ENCODE measurements at regions of chr18 and their contacts with region 1.

Region 1: GRCh38 chr18:63074981-63075404 is 244.6 kb downstream of the BCL2 start:
- DNase-seq: peak; percentile 70 to 75
- H3K4me3 ChIP-seq: peak overlapping the region; percentile 45
- H3K4me3 Mint-ChIP-seq: peak overlapping the region; percentile 80
- H3K27ac Mint-ChIP-seq: peak overlapping the region; percentile 71
- H3K4me1 ChIP-seq: peaks cover 22% of the 10 kb centered on the region
- H3K4me1 Mint-ChIP-seq: peaks cover 10% of the 10 kb centered on the region
- H3K27me3 ChIP-seq: no peaks in the 10 kb centered on the region
- H3K27me3 Mint-ChIP-seq: no peaks in the 10 kb centered on the region
- CTCF ChIP-seq: no peak

Region 2: GRCh38 chr18:62281684-62282083 is 793.3 kb before region 1 on chr18:
- CTCF ChIA-PET with region 1: no interaction called
- POLR2A ChIA-PET with region 1: no interaction called
- intact Hi-C with region 1: no loop called
- DNase-seq: no peak
- H3K4me3 ChIP-seq: no peak overlapping the region
- H3K4me3 Mint-ChIP-seq: no peak overlapping the region
- H3K27ac Mint-ChIP-seq: no peak overlapping the region
- H3K4me1 ChIP-seq: no peaks in the 10 kb centered on the region
- H3K4me1 Mint-ChIP-seq: no peaks in the 10 kb centered on the region
- H3K27me3 ChIP-seq: no peaks in the 10 kb centered on the region
- H3K27me3 Mint-ChIP-seq: no peaks in the 10 kb centered on the region
- CTCF ChIP-seq: no peak

Region 3: DNA sequence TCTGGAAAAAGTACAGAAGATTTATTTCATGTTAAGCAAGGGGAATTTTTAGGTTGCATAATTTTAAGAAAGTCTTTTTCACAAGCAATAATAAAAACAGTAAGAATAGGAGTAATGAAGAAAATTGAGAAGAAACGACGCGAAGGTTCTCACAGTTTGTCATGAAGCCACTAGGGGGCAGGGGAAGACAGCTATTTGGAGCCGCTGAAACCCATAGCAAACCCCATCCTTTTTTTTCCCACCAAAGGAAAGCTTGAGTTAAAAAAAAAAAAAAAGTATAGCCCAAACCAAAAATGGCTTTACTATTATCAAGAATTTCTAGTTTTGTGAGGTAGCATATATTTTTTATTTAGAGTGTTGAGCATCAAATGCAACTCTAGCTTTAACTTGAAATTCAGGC is 58.7 kb before region 1 on chr18:
- CTCF ChIA-PET with region 1: interaction called, 3 read pairs
- POLR2A ChIA-PET with region 1: no interaction called
- intact Hi-C with region 1: loop called (anchors 1 kb)
- DNase-seq: peak in 1 of 2 experiments; percentile 40
- H3K4me3 ChIP-seq: no peak overlapping the region
- H3K4me3 Mint-ChIP-seq: no peak overlapping the region
- H3K27ac Mint-ChIP-seq: no peak overlapping the region
- H3K4me1 ChIP-seq: no peaks in the 10 kb centered on the region
- H3K4me1 Mint-ChIP-seq: no peaks in the 10 kb centered on the region
- H3K27me3 ChIP-seq: no peaks in the 10 kb centered on the region
- H3K27me3 Mint-ChIP-seq: no peaks in the 10 kb centered on the region
- CTCF ChIP-seq: peak; percentile 40 to 60

Region 4: DNA sequence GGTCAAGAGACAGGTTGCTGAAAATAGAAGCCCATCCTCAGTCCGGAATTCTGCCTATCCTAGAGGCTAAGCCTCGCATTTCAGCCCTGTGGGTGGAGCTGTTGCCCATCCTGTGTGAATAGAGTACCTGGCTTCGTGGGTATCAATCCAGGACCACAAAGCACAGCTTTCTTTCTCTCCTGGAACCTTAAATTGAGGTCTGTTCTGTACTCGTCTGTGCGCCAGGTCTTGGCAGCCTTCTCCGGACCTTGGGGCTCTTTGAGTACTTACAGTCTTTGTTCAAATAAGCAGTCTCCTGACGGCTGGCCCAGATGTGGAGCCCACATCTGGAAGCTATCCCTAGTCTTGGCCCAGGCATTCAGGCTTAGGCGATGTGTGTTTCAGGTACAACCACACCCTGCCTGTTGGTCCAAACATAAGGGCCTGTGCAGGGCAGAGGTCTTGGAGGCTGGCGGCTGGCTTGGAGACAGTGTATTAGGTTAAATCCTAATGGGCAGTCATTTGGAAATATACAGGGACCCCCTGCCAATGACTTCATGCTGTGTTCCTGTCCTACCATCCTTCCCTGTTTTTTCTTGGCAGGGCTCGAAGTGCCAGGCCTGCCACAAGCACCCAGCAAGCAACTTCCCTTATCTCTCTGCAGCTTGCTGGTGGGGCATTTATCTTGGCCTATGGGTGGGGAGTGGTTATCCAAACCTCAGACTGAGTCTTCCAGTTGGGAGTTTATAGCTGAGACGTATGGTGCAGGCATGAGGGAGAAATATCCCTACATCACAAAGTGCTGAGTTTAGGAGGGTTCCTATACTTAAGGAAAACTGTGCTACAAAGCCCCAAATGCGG is 49.5 kb before region 1 on chr18:
- CTCF ChIA-PET with region 1: interaction called, 3 read pairs
- POLR2A ChIA-PET with region 1: no interaction called
- intact Hi-C with region 1: loop called (anchors 1 kb)
- DNase-seq: peak in 1 of 2 experiments; percentile 25
- H3K4me3 ChIP-seq: no peak overlapping the region
- H3K4me3 Mint-ChIP-seq: no peak overlapping the region
- H3K27ac Mint-ChIP-seq: no peak overlapping the region
- H3K4me1 ChIP-seq: no peaks in the 10 kb centered on the region
- H3K4me1 Mint-ChIP-seq: peaks cover 6% of the 10 kb centered on the region
- H3K27me3 ChIP-seq: no peaks in the 10 kb centered on the region
- H3K27me3 Mint-ChIP-seq: no peaks in the 10 kb centered on the region
- CTCF ChIP-seq: peak in 1 of 2 experiments; percentile 17

Region 5: DNA sequence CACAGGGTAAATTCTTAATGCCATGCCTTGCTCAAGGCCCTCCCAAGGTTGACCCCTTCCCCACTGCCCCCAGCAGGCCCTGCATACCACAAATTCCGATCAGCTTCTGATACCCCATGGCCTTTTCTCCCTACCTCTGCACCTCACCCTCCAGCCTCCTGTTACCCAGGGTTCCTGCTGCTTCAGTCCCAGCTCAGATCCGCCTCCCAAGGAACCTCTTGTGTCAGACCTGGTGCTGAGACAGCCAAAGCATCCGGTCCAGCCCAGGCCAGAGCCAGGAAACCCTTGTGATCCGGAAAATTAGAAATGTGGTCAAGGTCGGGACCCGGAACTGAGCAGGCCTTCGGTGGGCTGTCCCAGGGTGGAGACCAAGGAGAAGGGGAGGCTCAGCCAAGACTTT is 13.3 kb after region 1 on chr18:
- CTCF ChIA-PET with region 1: no interaction called
- POLR2A ChIA-PET with region 1: no interaction called
- intact Hi-C with region 1: loop called (anchors 1 kb)
- DNase-seq: peak; percentile 78 to 90
- H3K4me3 ChIP-seq: no peak overlapping the region
- H3K4me3 Mint-ChIP-seq: peak overlapping the region; percentile 58
- H3K27ac Mint-ChIP-seq: peak overlapping the region; percentile 90
- H3K4me1 ChIP-seq: peaks cover 21% of the 10 kb centered on the region
- H3K4me1 Mint-ChIP-seq: peaks cover 21% of the 10 kb centered on the region
- H3K27me3 ChIP-seq: no peaks in the 10 kb centered on the region
- H3K27me3 Mint-ChIP-seq: no peaks in the 10 kb centered on the region
- CTCF ChIP-seq: no peak

Region 6: GRCh38 chr18:63099848-63100629 is 25.0 kb after region 1 on chr18:
- CTCF ChIA-PET with region 1: no interaction called
- POLR2A ChIA-PET with region 1: no interaction called
- intact Hi-C with region 1: loop called (anchors 1 kb)
- DNase-seq: peak; percentile 59 to 71
- H3K4me3 ChIP-seq: no peak overlapping the region
- H3K4me3 Mint-ChIP-seq: peak overlapping the region; percentile 42
- H3K27ac Mint-ChIP-seq: peak overlapping the region; percentile 73
- H3K4me1 ChIP-seq: peaks cover 26% of the 10 kb centered on the region
- H3K4me1 Mint-ChIP-seq: peaks cover 18% of the 10 kb centered on the region
- H3K27me3 ChIP-seq: no peaks in the 10 kb centered on the region
- H3K27me3 Mint-ChIP-seq: no peaks in the 10 kb centered on the region
- CTCF ChIP-seq: no peak

Region 7: GRCh38 chr18:63131106-63131958 is 56.3 kb after region 1 on chr18:
- CTCF ChIA-PET with region 1: no interaction called
- POLR2A ChIA-PET with region 1: no interaction called
- intact Hi-C with region 1: loop called (anchors 2 kb)
- DNase-seq: no peak
- H3K4me3 ChIP-seq: no peak overlapping the region
- H3K4me3 Mint-ChIP-seq: no peak overlapping the region
- H3K27ac Mint-ChIP-seq: no peak overlapping the region
- H3K4me1 ChIP-seq: peaks cover 14% of the 10 kb centered on the region
- H3K4me1 Mint-ChIP-seq: peaks cover 9% of the 10 kb centered on the region
- H3K27me3 ChIP-seq: no peaks in the 10 kb centered on the region
- H3K27me3 Mint-ChIP-seq: no peaks in the 10 kb centered on the region
- CTCF ChIP-seq: peak; percentile 9 to 10

Region 8: GRCh38 chr18:63267975-63268721 is 193.2 kb after region 1 on chr18:
- CTCF ChIA-PET with region 1: no interaction called
- POLR2A ChIA-PET with region 1: no interaction called
- intact Hi-C with region 1: no loop called
- DNase-seq: no peak
- H3K4me3 ChIP-seq: no peak overlapping the region
- H3K4me3 Mint-ChIP-seq: no peak overlapping the region
- H3K27ac Mint-ChIP-seq: no peak overlapping the region
- H3K4me1 ChIP-seq: no peaks in the 10 kb centered on the region
- H3K4me1 Mint-ChIP-seq: no peaks in the 10 kb centered on the region
- H3K27me3 ChIP-seq: no peaks in the 10 kb centered on the region
- H3K27me3 Mint-ChIP-seq: no peaks in the 10 kb centered on the region
- CTCF ChIP-seq: no peak

Region 9: DNA sequence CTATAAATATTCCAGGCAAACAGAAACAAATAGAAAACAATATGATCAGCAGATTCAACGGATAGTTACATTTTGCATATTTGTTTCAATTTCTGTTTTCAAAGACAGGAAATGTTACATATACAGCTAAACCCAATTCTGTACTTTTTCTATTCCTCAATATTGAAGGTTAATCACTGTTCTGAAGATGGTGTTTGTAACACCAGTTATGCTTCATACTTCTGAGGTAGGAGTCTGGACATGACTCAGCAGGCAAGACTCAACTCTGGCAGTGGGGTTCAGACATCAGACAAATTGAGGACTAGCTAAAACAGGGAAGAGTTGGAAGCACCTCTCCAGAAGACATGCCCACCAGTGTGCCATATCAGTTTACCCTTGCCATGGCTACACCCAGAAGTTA is 528.8 kb after region 1 on chr18:
- CTCF ChIA-PET with region 1: no interaction called
- POLR2A ChIA-PET with region 1: no interaction called
- intact Hi-C with region 1: no loop called
- DNase-seq: no peak
- H3K4me3 ChIP-seq: no peak overlapping the region
- H3K4me3 Mint-ChIP-seq: no peak overlapping the region
- H3K27ac Mint-ChIP-seq: no peak overlapping the region
- H3K4me1 ChIP-seq: no peaks in the 10 kb centered on the region
- H3K4me1 Mint-ChIP-seq: no peaks in the 10 kb centered on the region
- H3K27me3 ChIP-seq: no peaks in the 10 kb centered on the region
- H3K27me3 Mint-ChIP-seq: no peaks in the 10 kb centered on the region
- CTCF ChIP-seq: no peak

Measured in Caco-2 (cell line).